Calu3 (cell line): ENCODE measurements at regions of chr14 and their contacts with region 1.

Region 1: DNA sequence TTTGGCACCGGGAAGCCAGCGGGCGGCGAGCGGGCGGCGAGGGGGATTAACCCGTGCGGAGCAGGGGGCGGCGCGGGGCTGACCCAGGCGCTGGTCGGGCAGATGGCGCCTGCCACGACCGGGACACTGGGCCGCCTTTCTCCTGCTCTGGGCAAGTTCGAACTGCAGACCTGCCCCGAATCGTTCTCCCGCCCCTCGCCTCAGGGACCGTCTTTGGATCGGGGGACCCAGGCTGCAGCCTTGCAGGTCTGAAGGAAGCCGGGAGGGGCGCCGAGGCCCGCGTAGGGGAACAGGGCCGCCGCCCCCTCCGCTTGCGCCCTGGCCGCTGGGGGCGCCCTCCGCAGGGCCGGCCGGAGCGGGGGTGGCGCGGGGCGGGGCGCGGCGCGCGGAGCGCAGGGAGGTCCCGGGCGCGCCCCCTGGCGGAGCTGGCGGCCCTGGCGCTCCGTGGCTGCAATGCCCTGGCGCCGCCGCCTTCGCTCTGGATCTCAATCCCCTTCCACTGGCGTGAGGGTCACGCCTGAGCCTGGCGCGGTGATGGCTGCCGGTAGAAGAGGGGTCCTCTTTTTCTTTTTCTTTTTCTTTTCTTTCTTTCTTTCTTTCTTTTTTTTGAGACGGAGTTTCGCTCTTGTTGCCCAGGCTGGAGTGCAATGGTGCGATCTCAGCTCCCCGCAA is 449 bp upstream of the LTBP2 start:
- DNase-seq: peak; percentile 93
- H3K4me3 Mint-ChIP-seq: peak overlapping the region; percentile 74
- H3K27ac Mint-ChIP-seq: peak overlapping the region; percentile 44
- H3K4me1 Mint-ChIP-seq: peaks cover 49% of the 10 kb centered on the region
- H3K27me3 Mint-ChIP-seq: no peaks in the 10 kb centered on the region
- CTCF ChIP-seq: peak; percentile 65

Region 2: GRCh38 chr14:74571901-74572725 is 40.4 kb before region 1 on chr14:
- CTCF ChIA-PET with region 1: interaction called, 13 read pairs
- intact Hi-C with region 1: no loop called
- DNase-seq: peak; percentile 43
- H3K4me3 Mint-ChIP-seq: peak overlapping the region; percentile 60
- H3K27ac Mint-ChIP-seq: peak overlapping the region; percentile 31
- H3K4me1 Mint-ChIP-seq: peaks cover 44% of the 10 kb centered on the region
- H3K27me3 Mint-ChIP-seq: no peaks in the 10 kb centered on the region
- CTCF ChIP-seq: no peak

Region 3: DNA sequence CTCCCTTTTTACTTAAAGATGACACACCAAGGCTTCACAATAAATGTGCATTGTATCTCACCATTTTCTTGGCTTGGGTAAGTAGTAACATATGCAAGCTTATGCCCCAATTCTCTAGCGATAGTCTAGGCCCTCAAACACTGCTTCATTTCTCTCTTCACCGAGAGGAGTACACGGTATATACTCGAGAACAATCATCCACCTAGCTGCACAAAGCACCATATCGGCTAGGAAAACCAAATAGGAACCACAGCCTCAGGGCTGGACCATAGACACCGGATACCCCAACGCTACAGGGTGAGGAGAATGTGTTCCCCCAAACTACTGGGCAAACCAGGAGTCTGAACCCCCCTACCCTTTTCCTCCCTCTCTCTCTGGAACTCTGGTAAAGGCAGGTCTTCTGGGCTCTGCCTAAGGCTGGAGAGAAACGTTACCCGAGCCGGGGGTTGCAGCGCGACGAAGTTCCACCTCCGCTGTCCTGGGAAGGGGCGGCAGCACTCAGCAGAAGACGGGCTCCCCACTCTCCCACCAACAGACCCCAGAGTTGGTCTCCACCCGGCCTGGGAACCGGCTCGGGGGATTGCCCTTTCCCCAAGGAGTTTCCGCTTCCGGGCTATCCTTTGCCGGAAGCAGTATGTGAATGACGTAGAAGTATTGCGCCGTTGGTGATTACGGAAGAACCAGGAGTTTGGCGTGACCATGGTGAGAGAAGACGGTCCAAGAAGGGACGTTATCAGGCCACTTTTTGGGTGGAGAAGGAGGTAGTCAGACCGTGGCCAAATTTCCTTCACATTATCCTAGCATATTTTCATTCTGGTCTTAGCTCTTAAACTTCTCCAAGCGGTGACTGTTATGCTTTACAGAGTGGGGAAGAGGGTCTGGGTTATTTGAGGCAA is 100.3 kb after region 1 on chr14 and contains the starts of genes AREL1 and FCF1:
- CTCF ChIA-PET with region 1: no interaction called
- intact Hi-C with region 1: loop called (anchors 10 kb)
- DNase-seq: peak; percentile 80
- H3K4me3 Mint-ChIP-seq: peak within 1 kb of the TSS; percentile 92
- H3K27ac Mint-ChIP-seq: peak within 1 kb of the TSS; percentile 99
- H3K4me1 Mint-ChIP-seq: peaks cover 10% of the 10 kb centered on the region
- H3K27me3 Mint-ChIP-seq: no peaks in the 10 kb centered on the region
- CTCF ChIP-seq: no peak
- total RNA-seq, gene AREL1: 31.9 and 40.3 TPM in 2 replicates
- total RNA-seq, gene FCF1: 58.0 and 60.9 TPM in 2 replicates

Region 4: DNA sequence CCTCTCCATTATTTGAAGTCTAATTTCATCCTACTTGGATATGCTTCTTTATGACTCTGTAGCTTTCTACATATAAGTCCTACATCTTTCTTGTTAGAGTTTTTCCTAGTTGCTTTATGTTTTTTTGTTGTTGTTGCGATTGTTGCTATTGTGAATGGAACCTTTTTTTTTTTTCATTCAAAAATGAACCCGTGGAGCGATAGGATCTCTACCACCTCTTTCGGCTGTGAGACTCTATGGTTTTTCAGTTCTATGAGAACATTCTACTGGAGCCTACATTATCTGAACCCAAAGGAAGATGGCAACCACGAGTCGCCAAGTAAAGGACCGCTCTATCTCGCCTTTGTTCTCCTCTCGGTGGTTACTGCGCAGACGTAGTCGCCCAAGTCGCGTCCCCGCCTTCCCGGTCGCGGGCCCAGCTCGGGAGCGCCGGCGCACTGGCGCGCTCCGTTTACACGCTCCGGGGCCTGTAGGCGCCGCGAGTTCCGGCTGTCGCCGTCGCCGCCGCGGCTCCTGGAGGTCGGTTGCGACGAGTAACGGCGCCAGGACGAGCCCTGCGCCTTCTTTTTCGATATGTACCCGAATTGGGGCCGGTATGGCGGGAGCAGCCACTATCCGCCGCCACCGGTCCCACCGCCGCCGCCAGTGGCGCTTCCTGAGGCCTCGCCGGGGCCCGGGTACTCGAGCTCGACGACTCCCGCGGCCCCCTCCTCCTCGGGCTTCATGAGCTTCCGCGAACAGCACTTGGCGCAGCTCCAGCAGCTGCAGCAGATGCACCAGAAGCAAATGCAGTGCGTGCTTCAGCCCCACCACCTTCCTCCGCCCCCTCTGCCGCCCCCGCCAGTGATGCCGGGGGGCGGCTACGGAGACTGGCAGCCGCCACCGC is 150.7 kb after region 1 on chr14 and contains the start of gene YLPM1:
- CTCF ChIA-PET with region 1: interaction called, 5 read pairs
- intact Hi-C with region 1: loop called (anchors 10 kb)
- DNase-seq: peak; percentile 92
- H3K4me3 Mint-ChIP-seq: peak within 1 kb of the TSS; percentile 81
- H3K27ac Mint-ChIP-seq: peak within 1 kb of the TSS; percentile 71
- H3K4me1 Mint-ChIP-seq: peaks cover 20% of the 10 kb centered on the region
- H3K27me3 Mint-ChIP-seq: no peaks in the 10 kb centered on the region
- CTCF ChIP-seq: no peak
- total RNA-seq, gene YLPM1: 66.5 and 67.5 TPM in 2 replicates

Region 5: DNA sequence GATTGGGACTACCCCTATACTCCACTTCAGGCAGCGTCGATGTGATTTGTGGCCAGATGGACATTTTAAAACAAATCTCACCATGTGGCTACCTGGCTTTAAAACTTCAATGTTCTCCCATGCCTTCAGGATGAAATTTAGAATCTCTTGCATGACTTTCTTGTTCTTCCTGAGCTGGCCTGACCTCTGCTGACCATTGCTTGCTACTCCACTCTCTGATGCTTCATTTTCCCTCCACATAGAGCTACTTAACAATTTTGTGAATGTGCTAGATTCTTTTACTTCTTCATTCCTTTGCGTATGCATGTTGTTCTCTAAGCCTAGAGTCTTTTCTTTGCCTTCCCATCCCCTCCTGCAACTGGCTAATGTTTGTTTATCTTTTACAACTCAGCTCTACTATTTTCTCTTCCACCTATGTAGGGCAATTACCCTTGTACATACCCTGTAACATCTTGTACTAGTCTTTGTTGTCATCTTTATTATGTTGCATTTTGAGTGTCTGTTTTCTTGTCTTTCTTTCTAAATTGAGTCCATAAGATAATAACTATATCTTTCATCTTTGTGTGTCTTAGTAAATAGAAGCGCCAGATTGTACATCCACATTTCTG is 191.8 kb after region 1 on chr14:
- CTCF ChIA-PET with region 1: interaction called, 20 read pairs
- intact Hi-C with region 1: loop called (anchors 1 kb)
- DNase-seq: peak; percentile 17
- H3K4me3 Mint-ChIP-seq: no peak overlapping the region
- H3K27ac Mint-ChIP-seq: no peak overlapping the region
- H3K4me1 Mint-ChIP-seq: no peaks in the 10 kb centered on the region
- H3K27me3 Mint-ChIP-seq: no peaks in the 10 kb centered on the region
- CTCF ChIP-seq: no peak